ENCODE measurements at regions of chr2 and their contacts with region 1.

Region 1: DNA sequence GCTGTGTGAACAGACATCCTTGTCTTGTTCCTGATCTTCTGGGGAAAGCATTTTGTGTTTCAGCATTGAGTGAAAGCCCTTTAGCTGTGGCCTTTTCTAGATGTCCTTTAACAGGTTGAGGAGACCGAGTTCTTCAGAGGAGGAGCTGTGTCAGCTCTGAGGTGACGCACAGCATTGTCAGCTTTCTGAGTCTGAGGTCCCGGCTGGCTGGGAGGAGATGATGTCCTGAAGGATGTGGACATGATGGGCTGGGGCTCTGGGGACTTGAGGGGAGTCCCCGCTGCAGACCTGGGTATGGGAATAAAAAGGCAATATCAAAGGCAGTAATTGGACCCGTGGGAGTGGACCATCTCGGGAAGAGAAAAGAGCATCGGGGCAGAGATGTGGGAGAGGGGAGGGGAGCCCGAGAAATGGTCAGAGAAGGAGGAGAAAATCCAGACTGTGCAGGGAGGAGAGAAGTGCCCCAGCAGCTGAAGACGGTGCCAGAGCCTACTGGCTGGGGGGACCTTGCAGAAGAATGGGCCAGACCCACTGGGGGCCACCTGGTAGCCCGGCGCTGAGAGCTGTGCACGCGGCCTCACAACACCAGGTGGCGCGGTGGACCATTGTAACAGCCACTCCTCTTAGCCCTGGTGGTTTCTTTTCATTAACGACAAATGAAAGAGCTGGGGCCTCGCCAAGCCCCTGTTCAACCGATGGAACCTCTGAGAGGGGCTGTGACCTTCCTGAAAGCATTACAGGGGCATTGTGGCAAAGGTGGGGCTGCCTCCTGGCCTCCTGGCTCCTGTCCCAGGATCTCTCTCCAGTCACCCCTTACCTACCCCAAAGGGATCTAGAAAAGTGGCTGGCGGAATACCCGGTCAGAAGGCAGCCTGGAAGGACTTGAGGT is 61.6 kb downstream of the ST3GAL5 start:
- DNase-seq: peak; percentile 68 to 87
- H3K4me3 ChIP-seq: no peak overlapping the region
- H3K4me1 ChIP-seq: no peaks in the 10 kb centered on the region
- H3K27me3 ChIP-seq: peaks cover 7% of the 10 kb centered on the region

Region 2: DNA sequence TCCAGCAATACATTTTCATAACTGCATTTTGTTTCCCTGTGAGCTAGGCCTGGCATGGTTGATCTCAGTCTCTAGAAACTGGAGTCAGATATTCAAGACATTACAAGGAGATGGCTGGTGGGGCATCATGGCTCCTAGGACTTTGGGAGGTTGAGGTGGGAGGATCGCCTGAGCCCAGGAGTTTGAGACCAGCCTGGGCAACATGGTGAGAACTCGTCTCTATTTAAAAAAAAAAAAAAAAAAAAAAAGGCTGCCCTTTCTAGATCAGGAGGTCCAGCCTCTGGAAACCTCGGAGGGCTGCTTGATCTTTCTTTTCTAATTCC is 250.2 kb before region 1 on chr2:
- in situ Hi-C with region 1: no loop called
- DNase-seq: no peak
- H3K4me3 ChIP-seq: no peak overlapping the region
- H3K4me1 ChIP-seq: peaks cover 8% of the 10 kb centered on the region
- H3K27me3 ChIP-seq: no peaks in the 10 kb centered on the region

Region 3: GRCh38 chr2:85949280-85949679 is 122.0 kb after region 1 on chr2:
- in situ Hi-C with region 1: no loop called
- DNase-seq: no peak
- H3K4me3 ChIP-seq: no peak overlapping the region
- H3K4me1 ChIP-seq: no peaks in the 10 kb centered on the region; the same call in 1 of the 2 replicates
- H3K27me3 ChIP-seq: no peaks in the 10 kb centered on the region

Region 4: DNA sequence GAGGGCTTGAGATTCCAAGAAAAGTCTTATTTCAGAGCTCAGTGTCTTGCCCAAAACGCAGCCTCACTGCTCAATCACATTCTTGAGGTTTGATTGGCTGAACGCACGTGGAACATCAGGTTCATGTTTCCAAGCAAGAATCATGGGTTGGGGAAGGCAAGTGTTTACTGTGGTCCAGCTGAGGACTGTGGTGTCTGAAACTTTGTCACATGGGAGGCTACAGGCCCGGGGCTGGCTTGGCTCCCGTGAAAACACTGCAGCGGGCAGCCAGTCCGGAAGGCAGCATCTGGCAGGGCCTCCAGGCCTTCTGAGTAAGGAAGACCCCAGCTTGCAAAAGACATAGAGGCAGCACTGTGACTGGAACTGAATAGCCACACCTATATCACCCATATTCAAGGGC is 193.8 kb after region 1 on chr2:
- in situ Hi-C with region 1: loop called (anchors 10 kb)
- DNase-seq: no peak
- H3K4me3 ChIP-seq: no peak overlapping the region
- H3K4me1 ChIP-seq: no peaks in the 10 kb centered on the region
- H3K27me3 ChIP-seq: no peaks in the 10 kb centered on the region

Region 5: GRCh38 chr2:86079981-86080911 is 253.0 kb after region 1 on chr2:
- in situ Hi-C with region 1: loop called (anchors 10 kb)
- DNase-seq: peak; percentile 16 to 81
- H3K4me3 ChIP-seq: no peak overlapping the region
- H3K4me1 ChIP-seq: no peaks in the 10 kb centered on the region
- H3K27me3 ChIP-seq: no peaks in the 10 kb centered on the region